ENCODE measurements at regions of chr22 and their contacts with region 1.

Region 1: GRCh38 chr22:31872209-31872608 is 72.1 kb upstream of the YWHAH start:
- DNase-seq: peak; percentile 34 to 61
- H3K4me3 ChIP-seq: no peak overlapping the region
- H3K27ac ChIP-seq: no peak overlapping the region
- H3K4me1 ChIP-seq: peaks cover 0 to 12% (median 0%) of the 10 kb centered on the region in 4 donors
- H3K27me3 ChIP-seq: no peaks in the 10 kb centered on the region
- CTCF ChIP-seq: peak in 3 of 7 experiments; percentile 6 to 31 (median 11)
- EP300 ChIP-seq: no peak
- POLR2A ChIP-seq: no peak

Region 2: DNA sequence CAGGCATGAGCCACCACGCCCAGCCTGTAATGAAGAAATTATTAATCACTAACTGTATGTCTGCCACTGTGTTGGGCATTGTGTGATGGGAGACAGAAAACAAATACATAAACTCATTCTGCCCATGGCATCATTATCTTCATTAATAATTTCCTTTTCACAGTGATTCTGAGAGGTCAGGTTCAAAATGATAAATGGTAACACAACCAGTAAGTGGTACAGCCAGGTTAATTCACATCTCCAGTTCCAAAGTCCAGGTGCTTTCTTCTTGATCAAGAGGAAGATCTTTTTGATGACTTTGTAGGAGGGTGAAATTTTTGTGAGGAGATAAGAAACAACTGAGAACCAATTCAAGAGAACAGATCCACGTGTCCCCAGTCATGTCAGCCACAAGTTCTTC is 276.9 kb before region 1 on chr22:
- intact Hi-C with region 1: no loop called
- DNase-seq: no peak
- H3K4me3 ChIP-seq: no peak overlapping the region
- H3K27ac ChIP-seq: no peak overlapping the region
- H3K4me1 ChIP-seq: no peaks in the 10 kb centered on the region
- H3K27me3 ChIP-seq: no peaks in the 10 kb centered on the region
- CTCF ChIP-seq: no peak
- EP300 ChIP-seq: no peak
- POLR2A ChIP-seq: no peak

Region 3: GRCh38 chr22:31818481-31819392 is 53.5 kb before region 1 on chr22:
- intact Hi-C with region 1: no loop called
- DNase-seq: no peak
- H3K4me3 ChIP-seq: no peak overlapping the region
- H3K27ac ChIP-seq: no peak overlapping the region
- H3K4me1 ChIP-seq: peaks cover 0 to 3% (median 0%) of the 10 kb centered on the region in 4 donors
- H3K27me3 ChIP-seq: no peaks in the 10 kb centered on the region
- CTCF ChIP-seq: no peak
- EP300 ChIP-seq: no peak
- POLR2A ChIP-seq: no peak

Region 4: GRCh38 chr22:31943976-31944699 is 71.9 kb after region 1 on chr22 and contains the start of gene YWHAH:
- intact Hi-C with region 1: no loop called
- DNase-seq: peak; percentile 97 to 99
- H3K4me3 ChIP-seq: peak within 1 kb of the TSS; percentile 76 to 99 (median 87)
- H3K27ac ChIP-seq: peak within 1 kb of the TSS; percentile 91 to 100 (median 96)
- H3K4me1 ChIP-seq: peaks cover 12 to 45% (median 33%) of the 10 kb centered on the region in 4 donors
- H3K27me3 ChIP-seq: no peaks in the 10 kb centered on the region
- CTCF ChIP-seq: no peak
- EP300 ChIP-seq: no peak
- POLR2A ChIP-seq: no peak
- total RNA-seq, gene YWHAH: 20.5 to 284 (median 81.1) TPM

Region 5: GRCh38 chr22:31969789-31970489 is 97.7 kb after region 1 on chr22:
- intact Hi-C with region 1: loop called (anchors 10 kb)
- DNase-seq: peak; percentile 80 to 93
- H3K4me3 ChIP-seq: peak overlapping the region; percentile 40 to 55 (median 47)
- H3K27ac ChIP-seq: peak overlapping the region in 2 of 5 donors; percentile 49 to 63
- H3K4me1 ChIP-seq: peaks cover 6 to 16% (median 15%) of the 10 kb centered on the region in 4 donors
- H3K27me3 ChIP-seq: no peaks in the 10 kb centered on the region
- CTCF ChIP-seq: peak in 2 of 7 experiments; percentile 44 to 54
- EP300 ChIP-seq: no peak
- POLR2A ChIP-seq: no peak